A549 (cell line): ENCODE measurements at regions of chr12 and their contacts with region 1.

Region 1: GRCh38 chr12:53352331-53353256 is 16.4 kb upstream of the SP7 start:
- DNase-seq: peak; percentile 66 to 93
- ATAC-seq: peak; percentile 99 to 100
- H3K4me3 ChIP-seq: no peak overlapping the region
- H3K27ac ChIP-seq: peak overlapping the region; percentile 29 to 63
- H3K4me1 ChIP-seq: peaks cover 6% of the 10 kb centered on the region
- CTCF ChIP-seq: peak; percentile 94
- EP300 ChIP-seq: no peak
- POLR2A ChIP-seq: no peak
- RAD21 ChIP-seq: peak; percentile 97 to 99

Region 2: DNA sequence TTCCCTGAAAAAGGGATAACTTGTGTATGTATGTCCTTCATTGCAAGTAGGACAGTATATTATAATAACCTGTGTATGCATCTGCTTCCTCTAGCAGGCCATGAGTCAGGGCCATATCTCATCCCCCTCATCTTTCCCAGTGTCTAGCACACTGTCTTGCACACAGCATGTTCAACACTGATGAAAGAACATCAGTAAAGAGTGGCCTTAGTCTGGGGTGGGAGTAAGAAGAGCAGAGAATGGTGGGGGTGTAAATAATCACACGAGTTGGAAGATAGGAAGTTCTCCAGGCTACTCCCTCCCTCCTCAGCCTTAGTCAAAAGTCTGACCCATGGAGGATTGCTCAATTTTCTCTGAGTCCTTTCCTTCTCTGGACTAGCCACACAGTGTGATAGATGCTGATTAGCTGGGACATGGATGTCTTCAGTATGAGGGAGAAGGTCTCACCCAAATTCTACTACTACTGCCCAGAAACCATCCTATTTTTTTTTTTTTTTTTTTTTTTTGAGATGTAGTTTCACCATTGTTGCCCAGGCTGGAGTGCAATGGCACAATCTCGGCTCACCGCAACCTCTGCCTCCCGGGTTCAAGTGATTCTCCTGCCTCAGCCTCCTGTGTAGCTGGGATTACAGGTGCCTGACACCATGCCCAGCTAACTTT is 12.8 kb after region 1 on chr12:
- CTCF ChIA-PET with region 1: interaction called, 47 read pairs
- POLR2A ChIA-PET with region 1: interaction called, 3 read pairs
- DNase-seq: no peak
- ATAC-seq: peak; percentile 55 to 76; a peak in 5 of 6 replicates
- H3K4me3 ChIP-seq: no peak overlapping the region
- H3K27ac ChIP-seq: peak overlapping the region in 1 of 2 experiments; percentile 73; a peak in 3 of 6 replicates
- H3K4me1 ChIP-seq: peaks cover 24% of the 10 kb centered on the region; the same call in 2 of the 3 replicates
- CTCF ChIP-seq: no peak
- EP300 ChIP-seq: no peak
- POLR2A ChIP-seq: no peak
- RAD21 ChIP-seq: no peak

Region 3: DNA sequence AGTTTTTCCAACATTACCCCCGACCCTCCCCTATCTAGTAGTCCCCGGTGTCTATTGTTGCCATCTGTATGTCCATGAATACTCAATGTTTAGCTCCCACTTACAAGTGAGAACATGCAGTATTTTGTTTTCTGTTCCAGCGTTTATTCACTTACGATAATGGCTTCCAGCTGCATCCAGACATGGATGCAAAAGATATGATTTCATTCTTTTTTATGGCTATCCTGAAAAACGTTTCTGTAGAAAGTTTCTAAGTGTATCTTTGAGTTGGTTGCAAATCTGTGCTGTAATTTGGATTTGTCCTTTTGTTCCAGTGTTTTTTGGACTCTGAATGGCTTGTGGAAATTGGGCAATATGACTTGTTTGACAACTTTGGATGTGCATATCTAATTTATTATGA is 39.1 kb after region 1 on chr12:
- CTCF ChIA-PET with region 1: interaction called, 199 read pairs
- POLR2A ChIA-PET with region 1: no interaction called
- DNase-seq: no peak
- ATAC-seq: no peak
- H3K4me3 ChIP-seq: no peak overlapping the region
- H3K27ac ChIP-seq: no peak overlapping the region
- H3K4me1 ChIP-seq: peaks cover 32% of the 10 kb centered on the region; the same call in 2 of the 3 replicates
- CTCF ChIP-seq: no peak
- EP300 ChIP-seq: no peak
- POLR2A ChIP-seq: no peak
- RAD21 ChIP-seq: no peak

Region 4: DNA sequence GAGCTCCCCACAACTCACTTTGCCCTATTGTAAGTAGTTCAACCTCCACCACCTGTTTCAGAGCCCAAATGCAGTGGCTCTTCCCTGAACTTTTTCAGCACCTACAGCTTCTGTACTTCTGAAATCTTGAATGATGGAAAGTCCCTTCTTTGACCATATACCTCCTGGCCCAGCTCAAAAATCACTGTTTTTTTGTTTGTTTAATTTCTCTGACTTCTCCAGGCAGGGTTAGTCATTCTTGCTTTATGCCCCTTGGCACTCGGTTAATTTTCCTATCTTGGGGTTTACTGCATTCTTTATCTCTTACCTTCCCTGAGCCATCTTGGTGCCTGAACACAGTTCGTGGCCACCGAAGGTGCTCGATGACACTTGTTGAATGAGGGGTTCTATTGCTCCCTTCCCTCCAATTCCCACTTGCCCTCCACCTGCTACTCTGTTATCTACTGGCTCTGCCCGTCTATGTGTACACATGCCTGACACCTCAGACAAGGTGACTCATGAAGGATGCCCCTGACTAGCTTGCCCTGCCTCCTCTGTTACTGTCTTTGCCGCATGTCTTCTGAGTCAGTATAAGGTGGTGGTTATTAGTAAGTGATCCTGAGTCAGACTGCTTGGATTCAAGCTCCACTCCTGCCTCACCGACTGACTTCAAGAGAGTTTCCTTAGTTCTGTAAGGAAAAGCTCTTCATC is 75.5 kb after region 1 on chr12:
- CTCF ChIA-PET with region 1: interaction called, 408 read pairs
- POLR2A ChIA-PET with region 1: interaction called, 3 read pairs
- DNase-seq: peak; percentile 89 to 91
- ATAC-seq: peak; percentile 94 to 96
- H3K4me3 ChIP-seq: no peak overlapping the region
- H3K27ac ChIP-seq: peak overlapping the region; percentile 71 to 85
- H3K4me1 ChIP-seq: peaks cover 45% of the 10 kb centered on the region
- CTCF ChIP-seq: no peak
- EP300 ChIP-seq: no peak
- POLR2A ChIP-seq: no peak
- RAD21 ChIP-seq: 0 out of 5 replicates have a peak, but pooled peaks of 1 of the 2 experiments have one; percentile 12

Region 5: GRCh38 chr12:53476769-53477209 is 124.2 kb after region 1 on chr12:
- CTCF ChIA-PET with region 1: interaction called, 46 read pairs
- POLR2A ChIA-PET with region 1: interaction called, 3 read pairs
- DNase-seq: no peak
- ATAC-seq: peak; percentile 47 to 64
- H3K4me3 ChIP-seq: no peak overlapping the region
- H3K27ac ChIP-seq: no peak overlapping the region
- H3K4me1 ChIP-seq: peaks cover 66% of the 10 kb centered on the region
- CTCF ChIP-seq: peak; percentile 57
- EP300 ChIP-seq: no peak
- POLR2A ChIP-seq: no peak
- RAD21 ChIP-seq: peak; percentile 24 to 44; a peak in 4 of 5 replicates

Region 6: GRCh38 chr12:53508534-53509199 is 156.1 kb after region 1 on chr12:
- CTCF ChIA-PET with region 1: interaction called, 44 read pairs
- POLR2A ChIA-PET with region 1: no interaction called
- DNase-seq: peak; percentile 77 to 85
- ATAC-seq: peak; percentile 85 to 93
- H3K4me3 ChIP-seq: no peak overlapping the region
- H3K27ac ChIP-seq: peak overlapping the region in 1 of 2 experiments; percentile 42; a peak in 1 of 6 replicates
- H3K4me1 ChIP-seq: peaks cover 9% of the 10 kb centered on the region
- CTCF ChIP-seq: peak; percentile 91
- EP300 ChIP-seq: no peak
- POLR2A ChIP-seq: no peak
- RAD21 ChIP-seq: peak; percentile 91 to 98